Aorta (tissue), 5 donors: ENCODE measurements at regions of chr4 and their contacts with region 1.

Region 1: GRCh38 chr4:102760645-102761295 is at the start of gene MANBA:
- DNase-seq: peak; percentile 93 to 95
- ATAC-seq: peak; percentile 98
- H3K4me3 ChIP-seq: peak within 1 kb of the TSS; percentile 75 to 85
- H3K27ac ChIP-seq: peak within 1 kb of the TSS in 1 of 2 donors; percentile 35
- H3K4me1 ChIP-seq: no peaks in the 10 kb centered on the region
- H3K27me3 ChIP-seq: no peaks in the 10 kb centered on the region
- total RNA-seq, gene MANBA: 20.9 to 41.4 TPM

Region 2: GRCh38 chr4:102620697-102621497 is 139.9 kb before region 1 on chr4:
- intact Hi-C with region 1: loop called in 1 of 2 experiments (anchors 5 kb)
- DNase-seq: no peak
- ATAC-seq: peak; percentile 88
- H3K4me3 ChIP-seq: no peak overlapping the region
- H3K27ac ChIP-seq: peak overlapping the region in 1 of 2 donors; percentile 58
- H3K4me1 ChIP-seq: peaks cover 0 to 2% of the 10 kb centered on the region in 2 donors
- H3K27me3 ChIP-seq: no peaks in the 10 kb centered on the region